Heart right ventricle (tissue), 16 donors: ENCODE measurements at regions of chr11 and their contacts with region 1.

Region 1: GRCh38 chr11:72015511-72016171 is 16.9 kb downstream of the IL18BP start:
- DNase-seq: no peak
- ATAC-seq: no peak
- H3K4me3 ChIP-seq: no peak overlapping the region
- H3K27ac ChIP-seq: no peak overlapping the region
- H3K4me1 ChIP-seq: peaks cover 33 to 47% (median 37%) of the 10 kb centered on the region in 9 donors
- H3K27me3 ChIP-seq: no peaks in the 10 kb centered on the region
- CTCF ChIP-seq: peak in 6 of 9 donors; percentile 11 to 33 (median 16)

Region 2: GRCh38 chr11:72222907-72223614 is 207.4 kb after region 1 on chr11:
- intact Hi-C with region 1: loop called in 1 of 10 experiments (anchors 10 kb)
- DNase-seq: peak; percentile 95 to 96
- ATAC-seq: peak; percentile 89 to 96 (median 93)
- H3K4me3 ChIP-seq: peak overlapping the region; percentile 57 to 94 (median 84)
- H3K27ac ChIP-seq: peak overlapping the region; percentile 94 to 100 (median 99)
- H3K4me1 ChIP-seq: peaks cover 5 to 55% (median 21%) of the 10 kb centered on the region in 9 donors
- H3K27me3 ChIP-seq: peaks cover 0 to 5% (median 0%) of the 10 kb centered on the region in 7 donors
- CTCF ChIP-seq: peak in 8 of 9 donors; percentile 21 to 67 (median 52)

Region 3: DNA sequence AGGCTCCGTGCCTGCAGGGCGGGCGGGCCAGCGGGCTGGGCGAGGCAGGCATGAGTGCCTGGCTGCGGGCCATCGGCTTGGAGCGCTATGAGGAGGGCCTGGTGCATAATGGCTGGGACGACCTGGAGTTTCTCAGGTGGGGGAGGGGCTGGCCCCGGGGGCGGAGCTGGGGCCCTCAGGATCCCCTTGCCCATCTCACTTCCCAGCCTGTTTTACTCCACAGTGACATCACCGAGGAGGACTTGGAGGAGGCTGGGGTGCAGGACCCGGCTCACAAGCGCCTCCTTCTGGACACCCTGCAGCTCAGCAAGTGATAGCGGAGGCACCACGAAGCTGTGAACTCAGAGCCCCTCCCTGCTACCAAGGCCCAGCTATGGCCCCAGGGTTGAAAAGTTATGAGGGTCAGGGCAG is 222.4 kb after region 1 on chr11:
- intact Hi-C with region 1: loop called in 1 of 10 experiments (anchors 10 kb)
- DNase-seq: peak in 1 of 2 donors; percentile 33
- ATAC-seq: peak; percentile 12 to 60 (median 34)
- H3K4me3 ChIP-seq: no peak overlapping the region
- H3K27ac ChIP-seq: no peak overlapping the region
- H3K4me1 ChIP-seq: peaks cover 10 to 58% (median 28%) of the 10 kb centered on the region in 9 donors
- H3K27me3 ChIP-seq: peaks cover 0 to 47% (median 28%) of the 10 kb centered on the region in 7 donors
- CTCF ChIP-seq: peak; percentile 41 to 77 (median 67)

Region 4: GRCh38 chr11:72534565-72535547 is 519.2 kb after region 1 on chr11:
- intact Hi-C with region 1: no loop called
- DNase-seq: no peak
- ATAC-seq: no peak
- H3K4me3 ChIP-seq: no peak overlapping the region
- H3K27ac ChIP-seq: no peak overlapping the region
- H3K4me1 ChIP-seq: peaks cover 0 to 8% (median 0%) of the 10 kb centered on the region in 9 donors
- H3K27me3 ChIP-seq: peaks cover 0 to 31% (median 15%) of the 10 kb centered on the region in 7 donors
- CTCF ChIP-seq: peak in 1 of 9 donors; percentile 9